CD8-positive, alpha-beta T cell (primary cell): ENCODE measurements at regions of chr6 and their contacts with region 1.

Region 1: DNA sequence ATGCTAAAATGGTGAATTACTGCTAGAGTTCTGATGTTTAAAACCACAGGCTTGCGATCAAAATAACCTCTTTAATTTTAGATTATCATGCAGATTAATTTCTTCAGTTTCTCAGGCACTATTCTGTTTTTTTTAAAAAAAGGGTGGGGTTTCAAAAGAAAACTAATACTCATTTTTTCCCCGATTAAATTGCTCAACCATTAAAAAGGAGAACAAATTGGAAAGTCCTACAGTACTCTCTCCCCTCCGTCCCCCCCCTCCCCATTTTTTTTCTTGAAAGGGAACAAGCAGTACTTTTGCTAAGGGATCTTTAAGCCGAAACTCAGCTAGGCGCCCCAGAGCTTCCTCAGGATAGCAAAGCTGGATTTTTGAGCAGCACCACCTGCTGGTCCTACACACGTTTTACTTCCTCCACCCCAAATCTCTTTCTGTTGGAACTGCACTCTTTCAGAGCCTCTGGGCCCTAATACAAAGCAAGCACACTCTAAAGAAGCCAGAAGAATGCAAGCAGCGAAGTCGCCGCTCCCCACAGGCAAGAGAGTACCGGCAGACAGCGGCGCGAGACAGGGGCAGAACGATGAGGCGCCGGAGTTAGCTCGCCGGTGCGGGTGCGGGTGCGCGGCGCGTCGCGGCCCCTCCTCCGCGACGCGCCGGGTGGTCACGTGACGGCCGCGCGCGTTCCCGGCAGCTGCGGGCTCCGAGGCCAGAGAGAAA is at the start of gene RNF146:
- DNase-seq: peak; percentile 42 to 86 (median 70)
- ATAC-seq: peak; percentile 78
- H3K4me3 ChIP-seq: peak within 1 kb of the TSS; percentile 87 to 95
- H3K4me3 Mint-ChIP-seq: peak within 1 kb of the TSS; percentile 99
- H3K27ac ChIP-seq: peak within 1 kb of the TSS; percentile 89 to 94
- H3K27ac Mint-ChIP-seq: peak within 1 kb of the TSS; percentile 99
- H3K4me1 ChIP-seq: peaks cover 20% of the 10 kb centered on the region
- H3K4me1 Mint-ChIP-seq: peaks cover 37% of the 10 kb centered on the region
- H3K27me3 ChIP-seq: no peaks in the 10 kb centered on the region
- H3K27me3 Mint-ChIP-seq: peaks cover 1% of the 10 kb centered on the region
- CTCF ChIP-seq: peak; percentile 68
- total RNA-seq, gene RNF146: 7.2 to 8.9 TPM

Region 2: DNA sequence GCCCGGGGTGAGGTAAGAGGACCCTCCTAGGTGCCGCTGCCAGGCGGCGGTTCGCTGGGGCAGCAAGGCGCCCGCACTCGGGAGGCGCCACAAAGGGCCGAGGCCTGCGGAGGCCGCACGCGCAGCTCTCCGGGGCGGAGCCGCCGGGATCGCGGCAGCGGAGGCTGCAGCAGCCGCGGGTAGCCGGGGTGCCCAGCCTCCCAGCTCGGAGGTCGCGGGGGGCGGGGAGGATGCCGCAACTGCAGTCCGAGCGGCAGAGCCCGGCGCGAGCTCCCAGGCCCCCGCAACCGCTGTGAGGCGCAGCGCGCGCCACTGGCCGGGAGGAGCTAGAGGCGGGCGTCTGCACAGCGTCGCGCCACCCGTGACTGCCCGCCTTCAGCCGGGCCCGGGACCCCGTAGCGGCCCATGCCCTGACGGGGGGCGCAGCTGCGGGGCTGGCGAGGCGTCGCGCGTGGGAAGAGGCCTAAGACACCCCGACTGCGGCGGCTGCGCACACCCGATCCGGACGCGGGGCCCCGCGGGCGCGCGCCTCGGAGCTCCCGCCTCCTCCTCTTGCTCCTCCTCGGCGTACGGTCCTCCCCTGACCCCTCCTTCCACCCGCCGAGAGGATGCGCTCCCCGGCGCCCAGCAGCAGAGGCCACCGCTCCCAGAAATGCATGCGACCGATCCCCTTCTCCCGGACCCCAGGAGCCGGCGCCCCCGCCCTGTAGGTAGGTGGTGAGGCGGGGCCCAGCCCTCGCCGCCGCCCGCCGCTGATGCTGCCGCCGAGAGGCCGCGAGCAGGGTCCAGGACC is 1475.8 kb before region 1 on chr6 and contains the start of gene NCOA7:
- CTCF ChIA-PET with region 1: no interaction called
- POLR2A ChIA-PET with region 1: interaction called, 7 read pairs
- intact Hi-C with region 1: loop called (anchors 2 to 5 kb)
- DNase-seq: peak; percentile 58 to 90 (median 81)
- ATAC-seq: peak; percentile 79
- H3K4me3 ChIP-seq: peak within 1 kb of the TSS; percentile 78 to 81
- H3K4me3 Mint-ChIP-seq: peak within 1 kb of the TSS; percentile 91
- H3K27ac ChIP-seq: peak within 1 kb of the TSS; percentile 72 to 92
- H3K27ac Mint-ChIP-seq: peak within 1 kb of the TSS; percentile 98
- H3K4me1 ChIP-seq: peaks cover 23% of the 10 kb centered on the region
- H3K4me1 Mint-ChIP-seq: peaks cover 49% of the 10 kb centered on the region
- H3K27me3 ChIP-seq: no peaks in the 10 kb centered on the region
- H3K27me3 Mint-ChIP-seq: no peaks in the 10 kb centered on the region
- CTCF ChIP-seq: no peak
- total RNA-seq, gene NCOA7: 27.2 to 28.6 TPM

Region 3: DNA sequence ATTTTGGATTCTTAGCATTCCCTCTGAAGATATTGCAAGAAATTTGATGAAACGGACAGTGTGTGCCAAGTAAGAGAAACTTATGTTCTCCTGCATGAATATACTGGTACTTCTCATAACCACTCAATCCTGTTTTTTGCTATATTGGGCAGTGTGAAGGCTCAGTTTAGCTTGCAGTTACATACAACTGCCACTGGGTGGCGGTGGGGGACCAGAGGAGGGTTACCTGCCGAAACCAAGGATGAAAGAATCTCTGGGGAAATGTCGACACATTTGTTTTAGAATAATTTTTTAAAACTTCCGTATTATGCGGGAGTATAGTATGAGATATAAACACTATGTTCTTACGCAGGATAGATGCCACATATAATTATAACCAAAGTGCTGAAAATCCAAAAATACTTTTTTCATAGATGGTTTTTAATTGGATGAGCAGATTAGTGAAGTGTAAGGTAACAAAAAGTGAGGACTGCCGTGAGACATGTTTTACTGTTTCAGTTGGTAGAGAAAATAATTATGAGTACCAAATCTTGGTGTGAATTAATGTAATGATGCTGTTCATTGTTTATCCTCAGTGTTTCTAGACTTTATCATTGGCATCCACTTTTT is 1270.3 kb before region 1 on chr6:
- CTCF ChIA-PET with region 1: no interaction called
- POLR2A ChIA-PET with region 1: no interaction called
- intact Hi-C with region 1: loop called in 1 of 2 experiments (anchors 1 kb)
- DNase-seq: peak; percentile 22 to 84 (median 69)
- ATAC-seq: peak; percentile 100
- H3K4me3 ChIP-seq: peak overlapping the region in 1 of 2 experiments; percentile 16
- H3K4me3 Mint-ChIP-seq: peak overlapping the region; percentile 76
- H3K27ac ChIP-seq: no peak overlapping the region
- H3K27ac Mint-ChIP-seq: no peak overlapping the region
- H3K4me1 ChIP-seq: no peaks in the 10 kb centered on the region
- H3K4me1 Mint-ChIP-seq: peaks cover 27% of the 10 kb centered on the region
- H3K27me3 ChIP-seq: no peaks in the 10 kb centered on the region
- H3K27me3 Mint-ChIP-seq: no peaks in the 10 kb centered on the region
- CTCF ChIP-seq: peak; percentile 99

Region 4: GRCh38 chr6:126963077-126963809 is 303.1 kb before region 1 on chr6:
- CTCF ChIA-PET with region 1: no interaction called
- POLR2A ChIA-PET with region 1: no interaction called
- intact Hi-C with region 1: no loop called
- DNase-seq: no peak
- ATAC-seq: no peak
- H3K4me3 ChIP-seq: no peak overlapping the region
- H3K4me3 Mint-ChIP-seq: no peak overlapping the region
- H3K27ac ChIP-seq: no peak overlapping the region
- H3K27ac Mint-ChIP-seq: no peak overlapping the region
- H3K4me1 ChIP-seq: no peaks in the 10 kb centered on the region
- H3K4me1 Mint-ChIP-seq: no peaks in the 10 kb centered on the region
- H3K27me3 ChIP-seq: no peaks in the 10 kb centered on the region
- H3K27me3 Mint-ChIP-seq: no peaks in the 10 kb centered on the region
- CTCF ChIP-seq: no peak

Region 5: DNA sequence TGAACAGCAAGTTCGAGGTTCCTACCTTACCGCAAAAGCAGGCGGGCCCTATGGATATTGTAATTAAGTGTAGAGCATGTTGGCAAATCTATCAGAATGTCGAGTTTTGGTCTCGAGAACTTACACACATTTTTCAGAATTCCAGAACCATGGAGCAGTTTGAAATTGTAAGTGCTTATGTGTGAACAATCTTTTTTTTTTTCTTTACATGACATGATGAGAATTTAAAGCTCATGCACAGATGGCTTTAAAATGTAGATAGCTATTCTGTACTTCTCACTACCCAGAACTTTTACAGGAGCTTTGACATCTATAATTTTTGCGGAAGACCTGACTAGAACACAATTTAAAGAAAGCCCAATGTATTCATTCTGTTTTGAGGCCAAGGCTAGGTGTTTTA is 265.7 kb before region 1 on chr6:
- CTCF ChIA-PET with region 1: no interaction called
- POLR2A ChIA-PET with region 1: no interaction called
- intact Hi-C with region 1: no loop called
- DNase-seq: no peak
- ATAC-seq: no peak
- H3K4me3 ChIP-seq: no peak overlapping the region
- H3K4me3 Mint-ChIP-seq: no peak overlapping the region
- H3K27ac ChIP-seq: no peak overlapping the region
- H3K27ac Mint-ChIP-seq: no peak overlapping the region
- H3K4me1 ChIP-seq: no peaks in the 10 kb centered on the region
- H3K4me1 Mint-ChIP-seq: no peaks in the 10 kb centered on the region
- H3K27me3 ChIP-seq: no peaks in the 10 kb centered on the region
- H3K27me3 Mint-ChIP-seq: no peaks in the 10 kb centered on the region
- CTCF ChIP-seq: no peak

Region 6: GRCh38 chr6:127277878-127278843 is 11.8 kb after region 1 on chr6:
- CTCF ChIA-PET with region 1: interaction called, 7 read pairs
- POLR2A ChIA-PET with region 1: interaction called, 4 read pairs
- intact Hi-C with region 1: loop called in 1 of 2 experiments (anchors 1 kb)
- DNase-seq: no peak
- ATAC-seq: no peak
- H3K4me3 ChIP-seq: no peak overlapping the region
- H3K4me3 Mint-ChIP-seq: no peak overlapping the region
- H3K27ac ChIP-seq: no peak overlapping the region
- H3K27ac Mint-ChIP-seq: no peak overlapping the region
- H3K4me1 ChIP-seq: no peaks in the 10 kb centered on the region
- H3K4me1 Mint-ChIP-seq: peaks cover 25% of the 10 kb centered on the region
- H3K27me3 ChIP-seq: no peaks in the 10 kb centered on the region
- H3K27me3 Mint-ChIP-seq: no peaks in the 10 kb centered on the region
- CTCF ChIP-seq: no peak

Region 7: DNA sequence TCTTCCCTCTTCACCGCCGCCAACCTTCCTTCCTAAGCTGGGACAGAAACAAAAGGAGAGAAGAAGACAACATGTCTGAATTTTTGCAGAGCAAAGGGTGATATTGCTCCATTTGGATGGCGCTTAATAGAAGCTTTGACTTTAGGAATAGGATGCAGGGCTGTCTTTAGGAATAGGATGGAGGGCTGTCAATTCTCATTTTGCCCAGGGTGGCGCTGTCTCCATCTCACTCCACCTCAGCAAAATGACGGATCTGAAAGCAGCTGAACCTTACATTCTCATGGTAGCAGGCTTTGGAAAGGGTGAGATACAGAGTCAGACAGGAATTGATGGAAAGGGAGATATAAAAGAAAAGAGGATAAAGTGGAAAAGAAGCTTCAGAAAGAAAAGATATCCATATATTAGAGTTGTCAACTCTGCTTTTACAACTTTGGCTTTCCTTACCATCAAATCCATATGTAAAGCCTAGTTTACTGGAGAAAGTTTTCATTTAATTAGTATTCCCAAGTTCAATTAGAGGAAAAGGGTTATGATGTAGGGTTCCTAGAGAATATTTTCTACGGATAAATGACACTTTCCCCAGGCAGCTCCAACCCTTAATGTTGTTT is 250.4 kb after region 1 on chr6:
- CTCF ChIA-PET with region 1: no interaction called
- POLR2A ChIA-PET with region 1: no interaction called
- intact Hi-C with region 1: loop called (anchors 2 to 5 kb)
- DNase-seq: peak in 6 of 9 experiments; percentile 23 to 69 (median 40)
- ATAC-seq: peak; percentile 28
- H3K4me3 ChIP-seq: peak overlapping the region; percentile 64 to 65
- H3K4me3 Mint-ChIP-seq: peak overlapping the region; percentile 86
- H3K27ac ChIP-seq: no peak overlapping the region
- H3K27ac Mint-ChIP-seq: peak overlapping the region; percentile 24
- H3K4me1 ChIP-seq: peaks cover 30% of the 10 kb centered on the region
- H3K4me1 Mint-ChIP-seq: peaks cover 30% of the 10 kb centered on the region
- H3K27me3 ChIP-seq: peaks cover 12 to 27% of the 10 kb centered on the region in 2 experiments
- H3K27me3 Mint-ChIP-seq: peaks cover 36% of the 10 kb centered on the region
- CTCF ChIP-seq: peak; percentile 74

Region 8: GRCh38 chr6:127630800-127631199 is 364.5 kb after region 1 on chr6:
- CTCF ChIA-PET with region 1: no interaction called
- POLR2A ChIA-PET with region 1: no interaction called
- intact Hi-C with region 1: no loop called
- DNase-seq: no peak
- ATAC-seq: no peak
- H3K4me3 ChIP-seq: no peak overlapping the region
- H3K4me3 Mint-ChIP-seq: no peak overlapping the region
- H3K27ac ChIP-seq: no peak overlapping the region
- H3K27ac Mint-ChIP-seq: no peak overlapping the region
- H3K4me1 ChIP-seq: no peaks in the 10 kb centered on the region
- H3K4me1 Mint-ChIP-seq: no peaks in the 10 kb centered on the region
- H3K27me3 ChIP-seq: no peaks in the 10 kb centered on the region
- H3K27me3 Mint-ChIP-seq: no peaks in the 10 kb centered on the region
- CTCF ChIP-seq: no peak